Naive thymus-derived CD4-positive, alpha-beta T cell (primary cell): ENCODE measurements at regions of chr14 and their contacts with region 1.

Region 1: DNA sequence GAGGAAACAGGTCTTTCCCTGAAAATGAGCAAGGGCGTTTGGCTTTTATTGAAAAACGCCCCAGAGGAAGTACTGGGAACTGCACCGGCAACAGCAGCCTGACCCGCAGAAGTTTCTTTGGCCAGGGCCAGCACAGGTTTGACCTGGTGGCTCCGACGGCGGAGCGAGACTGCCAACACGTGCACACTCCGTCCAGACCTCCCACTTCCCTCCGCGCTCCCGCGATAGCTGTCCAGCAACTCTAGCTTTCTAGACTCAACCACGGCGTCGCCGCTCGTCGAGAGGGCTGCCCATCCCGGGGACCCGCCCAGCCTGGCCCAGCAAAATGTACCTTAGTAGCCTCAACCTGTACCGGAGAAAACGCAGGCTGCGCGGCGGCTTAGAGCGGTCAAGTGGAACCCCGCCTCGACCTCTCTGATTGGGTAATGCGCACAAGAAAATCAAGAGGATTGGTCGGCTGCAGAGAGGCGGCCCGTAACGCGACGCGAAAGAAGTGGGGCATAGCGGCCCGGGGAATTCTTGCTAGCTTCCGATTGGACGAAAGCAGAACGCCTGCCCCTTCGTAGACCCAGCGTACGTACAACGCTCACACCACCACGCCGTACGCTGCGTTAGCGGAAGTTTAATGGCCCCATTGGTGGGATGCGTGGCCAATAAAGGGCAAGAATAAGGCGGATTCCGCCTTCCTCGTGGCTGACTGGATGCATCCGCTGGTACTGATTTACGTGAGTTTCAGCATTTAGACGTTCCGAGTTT is at the start of gene WDR89:
- DNase-seq: peak; percentile 84 to 99 (median 97)
- ATAC-seq: peak; percentile 92
- H3K4me3 ChIP-seq: peak within 1 kb of the TSS; percentile 76
- H3K4me3 Mint-ChIP-seq: peak within 1 kb of the TSS; percentile 84 to 98 (median 91)
- H3K27ac ChIP-seq: peak within 1 kb of the TSS; percentile 95
- H3K27ac Mint-ChIP-seq: peak within 1 kb of the TSS; percentile 88 to 100 (median 97)
- H3K4me1 ChIP-seq: peaks cover 17 to 28% of the 10 kb centered on the region in 2 donors
- H3K4me1 Mint-ChIP-seq: peaks cover 24 to 63% (median 46%) of the 10 kb centered on the region in 7 donors
- H3K27me3 ChIP-seq: no peaks in the 10 kb centered on the region
- H3K27me3 Mint-ChIP-seq: no peaks in the 10 kb centered on the region
- total RNA-seq, gene WDR89: 12.6 to 44.1 (median 24.0) TPM

Region 2: GRCh38 chr14:63388763-63389431 is 252.8 kb before region 1 on chr14:
- CTCF ChIA-PET with region 1: interaction called, 6 read pairs
- POLR2A ChIA-PET with region 1: no interaction called
- intact Hi-C with region 1: loop called in 1 of 2 experiments (anchors 2 kb)
- DNase-seq: peak in 8 of 9 donors; percentile 4 to 52 (median 24)
- ATAC-seq: peak; percentile 86
- H3K4me3 ChIP-seq: no peak overlapping the region
- H3K4me3 Mint-ChIP-seq: no peak overlapping the region
- H3K27ac ChIP-seq: no peak overlapping the region
- H3K27ac Mint-ChIP-seq: peak overlapping the region in 1 of 9 donors; percentile 43
- H3K4me1 ChIP-seq: no peaks in the 10 kb centered on the region
- H3K4me1 Mint-ChIP-seq: peaks cover 0 to 9% (median under 1%) of the 10 kb centered on the region in 7 donors
- H3K27me3 ChIP-seq: no peaks in the 10 kb centered on the region
- H3K27me3 Mint-ChIP-seq: no peaks in the 10 kb centered on the region

Region 3: DNA sequence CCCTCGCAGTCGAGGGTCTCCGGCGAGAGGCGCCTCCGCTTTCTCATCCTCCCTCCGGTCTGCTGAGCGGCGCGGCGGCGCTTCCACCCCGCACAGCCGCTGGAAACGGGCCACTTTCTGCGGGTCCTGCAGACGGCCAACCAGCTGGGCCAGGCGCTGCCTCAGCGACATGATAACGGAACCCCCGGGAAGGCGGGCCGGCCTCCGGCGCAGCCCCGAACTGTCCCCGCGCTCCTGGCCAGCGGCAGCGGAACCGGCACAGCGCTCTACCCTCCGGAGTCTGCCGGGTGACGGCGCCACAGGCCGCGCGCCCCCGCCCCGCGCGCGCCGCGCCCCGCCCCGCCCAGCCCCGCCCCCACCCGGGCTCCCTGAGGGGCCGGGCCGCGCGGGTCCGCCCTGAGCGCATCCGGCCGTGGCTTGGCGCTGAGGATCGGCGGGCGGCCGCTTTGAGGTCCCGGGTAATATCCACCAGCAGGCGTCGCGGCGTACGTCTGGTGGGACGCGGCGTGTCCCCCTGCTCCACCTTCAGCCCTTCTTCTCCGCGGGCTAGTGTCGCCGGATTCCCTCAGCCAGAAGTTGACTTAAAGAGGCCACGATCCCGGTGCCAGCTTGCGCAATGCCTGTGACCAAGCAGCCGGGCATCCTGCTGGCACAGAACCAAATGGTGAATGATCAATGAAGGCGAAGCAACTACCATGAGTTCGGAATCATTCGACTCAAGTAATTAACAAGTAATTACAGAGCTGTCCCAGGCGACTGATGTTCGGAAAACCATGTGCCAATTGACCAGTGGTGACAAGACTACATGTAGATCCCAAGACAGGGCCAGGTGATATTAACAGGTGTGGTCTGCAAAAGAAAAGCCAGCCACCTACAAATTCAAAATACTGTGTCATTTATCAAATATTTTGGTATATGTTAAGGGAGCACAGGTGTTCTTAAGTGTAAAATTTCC is 86.4 kb after region 1 on chr14 and contains the start of gene SGPP1:
- CTCF ChIA-PET with region 1: interaction called, 4 read pairs
- POLR2A ChIA-PET with region 1: interaction called, 105 read pairs
- intact Hi-C with region 1: loop called (anchors 1 kb)
- DNase-seq: peak; percentile 60 to 83 (median 77)
- ATAC-seq: peak; percentile 95
- H3K4me3 ChIP-seq: peak within 1 kb of the TSS; percentile 99
- H3K4me3 Mint-ChIP-seq: peak within 1 kb of the TSS; percentile 97 to 100 (median 99)
- H3K27ac ChIP-seq: peak within 1 kb of the TSS; percentile 89
- H3K27ac Mint-ChIP-seq: peak within 1 kb of the TSS; percentile 94 to 99 (median 97)
- H3K4me1 ChIP-seq: peaks cover 11 to 16% of the 10 kb centered on the region in 2 donors
- H3K4me1 Mint-ChIP-seq: peaks cover 29 to 51% (median 44%) of the 10 kb centered on the region in 7 donors
- H3K27me3 ChIP-seq: no peaks in the 10 kb centered on the region
- H3K27me3 Mint-ChIP-seq: peaks cover 0 to 22% (median 0%) of the 10 kb centered on the region in 5 donors
- total RNA-seq, gene SGPP1: 15.1 to 17.7 (median 15.7) TPM

Region 4: DNA sequence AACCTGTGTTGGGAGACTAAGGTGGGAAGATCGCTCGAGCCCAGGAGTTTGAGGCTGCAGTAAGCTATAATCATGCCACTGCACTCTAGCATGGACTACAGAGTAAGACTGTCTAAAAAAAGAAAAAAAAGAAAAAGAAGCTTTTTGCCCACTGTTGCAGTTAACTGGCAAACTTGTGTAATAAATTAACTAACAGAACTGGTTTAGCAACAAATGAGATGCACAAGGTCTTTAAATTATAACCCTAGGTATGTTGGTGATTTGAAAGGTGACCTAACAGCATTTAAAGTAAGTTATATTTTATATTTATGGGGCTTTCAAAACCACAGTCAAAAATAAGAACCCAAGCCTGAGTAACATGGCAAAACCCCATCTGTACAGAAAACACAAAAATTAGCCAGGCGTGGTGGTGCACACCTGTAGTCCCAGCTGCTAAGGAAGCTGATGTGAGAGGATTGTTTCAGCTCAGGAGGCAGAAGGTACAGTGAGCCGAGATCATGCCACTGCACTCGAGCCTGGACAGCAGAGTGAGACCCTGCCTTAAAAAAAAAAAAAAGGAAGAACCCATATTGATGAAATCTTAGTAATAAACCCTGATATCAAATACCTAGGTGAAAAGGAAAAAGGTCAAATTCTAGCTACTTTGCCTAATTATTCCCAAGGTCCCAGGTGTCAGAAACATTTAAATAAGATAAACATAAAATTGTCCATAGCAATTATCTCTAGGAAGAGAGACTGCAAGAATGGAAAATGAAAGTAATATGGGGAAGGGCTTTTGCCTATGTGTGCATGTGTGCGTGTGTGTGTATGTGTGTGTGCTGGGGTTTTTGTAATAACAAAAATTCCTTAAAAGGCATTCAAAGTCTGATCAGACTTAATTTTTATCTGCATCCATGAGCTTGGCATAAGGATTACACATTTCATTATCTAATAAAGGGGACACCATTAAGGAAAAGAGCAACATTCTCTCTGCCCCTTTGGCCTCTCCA is 226.6 kb after region 1 on chr14:
- CTCF ChIA-PET with region 1: no interaction called
- POLR2A ChIA-PET with region 1: interaction called, 7 read pairs
- intact Hi-C with region 1: loop called (anchors 1 to 5 kb)
- DNase-seq: peak in 6 of 9 donors; percentile 15 to 44 (median 28)
- ATAC-seq: no peak
- H3K4me3 ChIP-seq: no peak overlapping the region
- H3K4me3 Mint-ChIP-seq: peak overlapping the region; percentile 46 to 84 (median 75)
- H3K27ac ChIP-seq: peak overlapping the region; percentile 36
- H3K27ac Mint-ChIP-seq: peak overlapping the region; percentile 84 to 98 (median 92)
- H3K4me1 ChIP-seq: peaks cover 36 to 60% of the 10 kb centered on the region in 2 donors
- H3K4me1 Mint-ChIP-seq: peaks cover 37 to 78% (median 64%) of the 10 kb centered on the region in 7 donors
- H3K27me3 ChIP-seq: no peaks in the 10 kb centered on the region
- H3K27me3 Mint-ChIP-seq: no peaks in the 10 kb centered on the region

Region 5: DNA sequence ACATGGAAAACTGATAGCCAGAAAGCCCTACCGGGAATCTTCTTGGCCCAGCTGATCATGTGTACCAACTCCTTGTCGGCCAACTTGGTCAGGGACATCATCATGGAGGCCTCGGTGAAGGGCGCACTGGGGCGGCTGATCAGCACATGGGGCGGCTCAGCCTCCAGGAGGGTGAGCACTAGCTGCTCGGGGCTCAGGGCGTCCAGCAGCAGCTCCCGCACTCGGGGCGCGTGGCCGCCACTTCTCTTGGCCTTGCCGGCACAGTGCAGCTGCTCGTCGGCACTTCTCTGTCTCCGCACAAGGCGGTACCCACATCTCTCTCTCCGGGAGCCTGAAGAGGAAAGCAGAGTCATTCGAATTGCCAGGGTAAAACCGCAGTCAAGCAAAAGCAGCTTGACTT is 618.8 kb after region 1 on chr14:
- CTCF ChIA-PET with region 1: no interaction called
- POLR2A ChIA-PET with region 1: no interaction called
- intact Hi-C with region 1: no loop called
- DNase-seq: no peak
- ATAC-seq: no peak
- H3K4me3 ChIP-seq: no peak overlapping the region
- H3K4me3 Mint-ChIP-seq: no peak overlapping the region
- H3K27ac ChIP-seq: no peak overlapping the region
- H3K27ac Mint-ChIP-seq: no peak overlapping the region
- H3K4me1 ChIP-seq: no peaks in the 10 kb centered on the region
- H3K4me1 Mint-ChIP-seq: peaks cover 0 to under 1% (median 0%) of the 10 kb centered on the region in 7 donors
- H3K27me3 ChIP-seq: no peaks in the 10 kb centered on the region
- H3K27me3 Mint-ChIP-seq: peaks cover 0 to 9% (median 0%) of the 10 kb centered on the region in 5 donors

Region 6: DNA sequence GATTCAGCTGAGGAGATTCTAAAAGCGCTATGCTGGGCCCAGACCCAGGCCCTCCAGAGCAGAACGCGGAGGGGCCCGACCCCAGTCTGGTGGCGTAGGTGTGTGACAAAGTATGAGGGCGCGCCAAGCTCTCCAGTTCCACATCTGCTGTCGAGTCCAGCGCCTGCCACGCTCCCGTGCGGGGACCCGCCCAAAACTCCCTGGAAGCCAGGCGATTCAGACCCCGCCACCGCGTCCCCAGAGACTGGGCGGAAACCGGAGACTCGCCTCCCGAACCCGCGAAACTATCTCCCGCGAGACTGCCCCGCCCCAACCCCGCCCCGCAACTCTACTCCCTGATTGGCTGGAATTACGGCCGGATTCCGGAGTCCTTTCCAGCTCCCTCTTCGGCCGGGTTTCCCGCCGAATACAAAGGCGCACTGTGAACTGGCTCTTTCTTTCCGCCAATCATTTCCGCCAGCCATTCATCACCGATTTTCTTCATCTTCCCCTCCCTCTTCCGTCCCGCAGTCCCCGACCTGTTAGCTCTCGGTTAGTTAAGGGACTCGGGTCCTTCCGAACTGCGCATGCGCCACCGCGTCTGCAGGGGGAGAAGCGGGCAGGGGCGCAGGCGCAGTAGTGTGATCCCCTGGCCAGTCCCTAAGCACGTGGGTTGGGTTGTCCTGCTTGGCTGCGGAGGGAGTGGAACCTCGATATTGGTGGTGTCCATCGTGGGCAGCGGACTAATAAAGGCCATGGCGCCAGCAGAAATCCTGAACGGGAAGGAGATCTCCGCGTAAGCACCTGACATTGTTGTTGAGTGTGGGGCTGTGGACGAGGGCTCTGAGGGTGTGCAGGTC is 746.3 kb after region 1 on chr14 and contains the start of gene MTHFD1:
- CTCF ChIA-PET with region 1: no interaction called
- POLR2A ChIA-PET with region 1: no interaction called
- intact Hi-C with region 1: loop called in 1 of 2 experiments (anchors 5 kb)
- DNase-seq: peak; percentile 93 to 97 (median 96)
- ATAC-seq: peak; percentile 90
- H3K4me3 ChIP-seq: peak within 1 kb of the TSS; percentile 89
- H3K4me3 Mint-ChIP-seq: peak within 1 kb of the TSS; percentile 92 to 99 (median 96)
- H3K27ac ChIP-seq: peak within 1 kb of the TSS; percentile 79
- H3K27ac Mint-ChIP-seq: peak within 1 kb of the TSS; percentile 90 to 99 (median 95)
- H3K4me1 ChIP-seq: peaks cover 11 to 17% of the 10 kb centered on the region in 2 donors
- H3K4me1 Mint-ChIP-seq: peaks cover 18 to 49% (median 41%) of the 10 kb centered on the region in 7 donors
- H3K27me3 ChIP-seq: no peaks in the 10 kb centered on the region
- H3K27me3 Mint-ChIP-seq: peaks cover 0 to 4% (median 0%) of the 10 kb centered on the region in 5 donors
- total RNA-seq, gene MTHFD1: 28.0 to 189 (median 30.2) TPM

Region 7: DNA sequence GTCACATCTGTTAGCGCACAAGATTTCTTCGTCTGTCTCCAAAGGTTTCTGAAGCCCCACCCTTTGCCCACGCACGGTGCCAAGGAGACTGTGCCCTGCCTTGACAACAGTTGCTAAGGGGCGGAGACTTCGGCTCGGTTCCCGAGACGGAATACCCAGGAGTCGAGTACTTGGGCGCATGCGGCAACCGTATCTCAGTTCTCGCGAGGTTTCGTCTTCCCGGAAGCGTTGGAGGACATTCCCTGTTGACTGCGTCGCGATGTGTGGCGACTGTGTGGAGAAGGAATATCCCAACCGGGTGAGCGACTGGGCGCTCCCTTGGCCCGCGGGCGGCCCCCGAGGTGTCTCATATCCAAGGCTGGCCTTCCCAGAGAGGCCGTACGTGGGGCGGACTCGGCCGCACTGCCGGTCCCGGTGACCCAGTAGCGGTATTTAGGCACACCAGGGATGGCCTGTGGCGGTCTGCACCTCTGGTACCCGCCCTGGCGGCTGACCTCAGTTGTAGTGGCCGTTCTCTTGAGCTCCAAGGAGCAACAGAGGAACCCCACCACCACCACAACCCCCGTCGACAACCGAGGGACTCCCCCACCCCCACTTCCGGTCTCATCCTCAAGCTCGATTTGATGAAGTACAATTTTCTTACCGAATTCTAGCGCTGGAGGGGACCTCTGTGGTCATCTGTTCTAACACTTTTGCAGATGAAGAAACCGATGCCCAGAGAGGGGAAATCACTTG is 1272.8 kb after region 1 on chr14 and contains the start of gene CHURC1:
- CTCF ChIA-PET with region 1: interaction called, 3 read pairs
- POLR2A ChIA-PET with region 1: interaction called, 3 read pairs
- intact Hi-C with region 1: loop called in 1 of 2 experiments (anchors 5 kb)
- DNase-seq: peak; percentile 83 to 99 (median 94)
- ATAC-seq: peak; percentile 98
- H3K4me3 ChIP-seq: peak within 1 kb of the TSS; percentile 96
- H3K4me3 Mint-ChIP-seq: peak within 1 kb of the TSS; percentile 87 to 97 (median 92)
- H3K27ac ChIP-seq: peak within 1 kb of the TSS; percentile 99
- H3K27ac Mint-ChIP-seq: peak within 1 kb of the TSS; percentile 93 to 99 (median 97)
- H3K4me1 ChIP-seq: peaks cover 33 to 37% of the 10 kb centered on the region in 2 donors
- H3K4me1 Mint-ChIP-seq: peaks cover 42 to 60% (median 51%) of the 10 kb centered on the region in 7 donors
- H3K27me3 ChIP-seq: no peaks in the 10 kb centered on the region
- H3K27me3 Mint-ChIP-seq: peaks cover 0 to 13% (median 0%) of the 10 kb centered on the region in 5 donors
- total RNA-seq, gene CHURC1: 71.9 to 117 (median 80.7) TPM